ENCODE measurements at regions of chr2 and their contacts with region 1.

Region 1: GRCh38 chr2:75627895-75628504 is 18.6 kb upstream of the MRPL19 start:
- DNase-seq: peak; percentile 85
- ATAC-seq: peak; percentile 92
- H3K4me3 Mint-ChIP-seq: no peak overlapping the region
- H3K27ac Mint-ChIP-seq: no peak overlapping the region
- H3K4me1 Mint-ChIP-seq: peaks cover 9% of the 10 kb centered on the region
- H3K27me3 Mint-ChIP-seq: no peaks in the 10 kb centered on the region
- CTCF ChIP-seq: peak; percentile 78

Region 2: DNA sequence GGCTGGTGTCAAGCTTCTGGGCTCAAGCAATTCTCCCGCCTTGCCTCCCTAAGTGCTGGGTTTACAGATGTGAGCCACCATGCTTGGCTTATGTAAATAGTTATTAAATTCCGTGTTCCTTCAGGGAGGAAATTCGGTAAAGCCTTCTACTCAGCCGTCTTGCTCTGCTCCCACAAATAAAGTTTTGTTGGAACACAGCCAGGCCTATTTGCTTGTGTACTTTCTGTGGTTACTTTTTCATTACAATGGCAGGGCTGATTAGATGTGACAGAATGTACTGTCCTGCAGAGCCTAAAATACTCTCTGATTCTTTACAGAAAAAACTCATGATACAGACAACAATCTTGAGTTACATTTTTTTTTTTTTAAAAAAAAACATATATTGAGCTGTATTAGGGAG is 359.9 kb before region 1 on chr2:
- CTCF ChIA-PET with region 1: no interaction called
- POLR2A ChIA-PET with region 1: no interaction called
- DNase-seq: no peak
- ATAC-seq: no peak
- H3K4me3 Mint-ChIP-seq: no peak overlapping the region
- H3K27ac Mint-ChIP-seq: no peak overlapping the region
- H3K4me1 Mint-ChIP-seq: no peaks in the 10 kb centered on the region
- H3K27me3 Mint-ChIP-seq: no peaks in the 10 kb centered on the region
- CTCF ChIP-seq: no peak

Region 3: DNA sequence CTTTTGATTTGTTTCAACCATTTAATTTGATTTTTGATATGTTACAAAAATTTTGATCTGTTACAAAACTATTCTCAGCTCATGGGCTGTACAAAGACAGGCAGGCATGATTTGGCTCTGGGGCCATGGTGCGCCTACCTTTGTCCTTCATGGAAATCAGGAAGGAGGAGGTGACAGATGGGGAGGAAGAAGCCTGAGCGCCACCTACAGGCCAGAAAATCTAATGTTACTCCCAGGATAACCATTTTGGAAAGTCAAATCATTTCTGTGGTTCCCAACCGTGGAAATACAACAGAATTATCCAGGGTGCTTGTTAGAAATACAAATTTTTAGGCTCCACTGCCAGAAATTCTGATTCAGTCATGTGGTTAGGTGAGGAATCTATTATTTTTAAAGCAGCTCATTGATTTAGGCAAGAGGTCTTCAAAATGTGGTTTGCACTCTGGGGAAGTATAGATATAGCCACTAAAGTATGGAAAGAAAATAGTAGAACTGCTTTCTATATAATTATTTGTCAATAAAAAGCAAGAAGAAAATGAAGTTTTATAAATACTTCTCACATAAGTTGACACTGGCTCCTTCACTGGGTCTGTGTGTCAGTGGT is 161.2 kb before region 1 on chr2:
- CTCF ChIA-PET with region 1: interaction called, 13 read pairs
- POLR2A ChIA-PET with region 1: no interaction called
- DNase-seq: peak; percentile 71
- ATAC-seq: peak; percentile 79
- H3K4me3 Mint-ChIP-seq: no peak overlapping the region
- H3K27ac Mint-ChIP-seq: no peak overlapping the region
- H3K4me1 Mint-ChIP-seq: peaks cover 15% of the 10 kb centered on the region
- H3K27me3 Mint-ChIP-seq: no peaks in the 10 kb centered on the region
- CTCF ChIP-seq: peak; percentile 80

Region 4: GRCh38 chr2:75560768-75561565 is 67.0 kb before region 1 on chr2 and contains the start of gene EVA1A:
- CTCF ChIA-PET with region 1: interaction called, 10 read pairs
- POLR2A ChIA-PET with region 1: no interaction called
- DNase-seq: peak; percentile 73
- ATAC-seq: peak; percentile 65
- H3K4me3 Mint-ChIP-seq: peak within 1 kb of the TSS; percentile 97
- H3K27ac Mint-ChIP-seq: peak within 1 kb of the TSS; percentile 48; the same call in 1 of the 2 replicates
- H3K4me1 Mint-ChIP-seq: peaks cover 40% of the 10 kb centered on the region
- H3K27me3 Mint-ChIP-seq: peaks cover 29% of the 10 kb centered on the region
- CTCF ChIP-seq: no peak
- total RNA-seq, gene EVA1A: 3.2 to 4.1 TPM (median 3.3 TPM) in 3 replicates

Region 5: DNA sequence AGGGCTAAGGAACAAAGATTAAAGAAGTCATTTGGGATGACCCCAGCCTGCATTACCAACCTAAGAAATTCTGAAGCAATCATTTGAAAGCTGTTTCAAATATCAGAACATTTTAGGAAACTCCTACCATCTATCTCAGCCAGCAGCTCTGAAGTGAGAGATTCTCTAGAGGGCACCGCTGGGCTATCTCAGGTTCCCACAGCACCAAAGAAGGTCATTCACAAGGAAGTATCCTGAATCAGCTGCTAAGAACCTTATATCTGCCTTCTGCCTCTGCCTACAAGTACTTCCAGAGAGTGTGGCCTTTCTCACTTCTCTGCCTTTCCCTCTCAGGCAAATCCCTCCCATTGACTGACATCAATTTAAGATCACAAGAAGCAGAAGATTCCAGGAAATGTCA is 53.9 kb before region 1 on chr2:
- CTCF ChIA-PET with region 1: interaction called, 10 read pairs
- POLR2A ChIA-PET with region 1: no interaction called
- DNase-seq: no peak
- ATAC-seq: peak; percentile 51; the same call in 1 of the 2 replicates
- H3K4me3 Mint-ChIP-seq: no peak overlapping the region
- H3K27ac Mint-ChIP-seq: no peak overlapping the region
- H3K4me1 Mint-ChIP-seq: no peaks in the 10 kb centered on the region
- H3K27me3 Mint-ChIP-seq: no peaks in the 10 kb centered on the region; the same call in none of the 2 replicates
- CTCF ChIP-seq: no peak

Region 6: DNA sequence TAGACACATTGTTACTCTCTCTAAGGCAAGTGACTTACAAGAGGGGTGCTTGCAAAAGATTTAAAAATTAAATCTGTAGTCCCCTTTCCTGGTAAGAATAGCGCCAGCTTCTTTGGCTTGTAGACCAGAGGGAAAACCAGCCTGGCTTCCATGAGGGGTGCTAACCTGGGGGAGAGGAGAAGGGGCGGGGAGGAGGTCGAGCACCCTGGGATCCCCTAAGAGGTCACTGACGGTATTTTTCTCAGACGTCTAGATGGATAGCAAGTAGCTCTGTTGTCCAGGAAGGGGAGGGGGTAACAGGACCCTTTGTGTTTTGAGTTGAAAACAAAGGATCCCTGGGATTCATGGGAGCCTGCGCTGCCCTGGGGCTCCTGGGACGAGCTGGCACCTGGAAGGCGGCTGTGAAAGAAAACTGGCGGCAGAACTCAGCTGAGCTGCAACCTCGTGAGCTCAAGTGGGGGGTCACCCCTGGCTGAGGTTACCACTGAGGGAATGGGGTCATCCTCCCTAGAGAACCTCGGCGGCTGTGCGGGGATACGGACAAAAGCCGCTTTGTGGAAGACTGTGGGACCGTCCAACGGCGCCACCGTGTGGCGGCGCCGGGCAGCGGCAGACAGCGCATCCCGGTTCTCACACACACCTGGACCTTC is 19.2 kb before region 1 on chr2:
- CTCF ChIA-PET with region 1: interaction called, 19 read pairs
- POLR2A ChIA-PET with region 1: interaction called, 3 read pairs
- DNase-seq: peak; percentile 80
- ATAC-seq: peak; percentile 88
- H3K4me3 Mint-ChIP-seq: peak overlapping the region; percentile 66
- H3K27ac Mint-ChIP-seq: no peak overlapping the region
- H3K4me1 Mint-ChIP-seq: peaks cover 13% of the 10 kb centered on the region
- H3K27me3 Mint-ChIP-seq: peaks cover 16% of the 10 kb centered on the region
- CTCF ChIP-seq: peak; percentile 86

Region 7: DNA sequence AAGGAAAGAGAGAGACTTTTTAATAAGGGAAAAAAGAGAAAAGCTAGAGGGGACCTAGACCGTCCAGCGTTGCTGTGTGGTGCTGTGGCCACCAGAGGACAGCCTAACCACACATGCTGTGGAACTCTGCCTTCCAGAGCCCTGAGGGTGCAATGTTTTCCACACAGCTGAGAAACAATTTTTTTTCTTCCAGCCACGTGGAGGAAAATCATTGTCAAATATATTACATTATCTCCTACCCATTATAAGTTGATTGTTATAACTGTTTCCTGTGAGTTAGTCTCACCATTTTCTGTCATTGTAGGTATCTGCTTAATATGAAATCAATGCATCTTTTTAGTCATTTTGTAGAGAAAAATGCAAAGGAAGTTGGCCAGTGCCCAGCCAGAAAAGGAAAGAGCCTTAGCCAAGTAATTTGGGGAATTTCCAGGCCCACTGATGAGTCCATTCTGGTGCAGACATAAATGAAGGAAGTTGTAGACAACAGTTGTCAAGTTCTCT is 12.7 kb after region 1 on chr2:
- CTCF ChIA-PET with region 1: interaction called, 24 read pairs
- POLR2A ChIA-PET with region 1: no interaction called
- DNase-seq: peak; percentile 68
- ATAC-seq: peak; percentile 98
- H3K4me3 Mint-ChIP-seq: no peak overlapping the region
- H3K27ac Mint-ChIP-seq: no peak overlapping the region
- H3K4me1 Mint-ChIP-seq: peaks cover 9% of the 10 kb centered on the region
- H3K27me3 Mint-ChIP-seq: no peaks in the 10 kb centered on the region; the same call in 1 of the 2 replicates
- CTCF ChIP-seq: peak; percentile 81

Region 8: DNA sequence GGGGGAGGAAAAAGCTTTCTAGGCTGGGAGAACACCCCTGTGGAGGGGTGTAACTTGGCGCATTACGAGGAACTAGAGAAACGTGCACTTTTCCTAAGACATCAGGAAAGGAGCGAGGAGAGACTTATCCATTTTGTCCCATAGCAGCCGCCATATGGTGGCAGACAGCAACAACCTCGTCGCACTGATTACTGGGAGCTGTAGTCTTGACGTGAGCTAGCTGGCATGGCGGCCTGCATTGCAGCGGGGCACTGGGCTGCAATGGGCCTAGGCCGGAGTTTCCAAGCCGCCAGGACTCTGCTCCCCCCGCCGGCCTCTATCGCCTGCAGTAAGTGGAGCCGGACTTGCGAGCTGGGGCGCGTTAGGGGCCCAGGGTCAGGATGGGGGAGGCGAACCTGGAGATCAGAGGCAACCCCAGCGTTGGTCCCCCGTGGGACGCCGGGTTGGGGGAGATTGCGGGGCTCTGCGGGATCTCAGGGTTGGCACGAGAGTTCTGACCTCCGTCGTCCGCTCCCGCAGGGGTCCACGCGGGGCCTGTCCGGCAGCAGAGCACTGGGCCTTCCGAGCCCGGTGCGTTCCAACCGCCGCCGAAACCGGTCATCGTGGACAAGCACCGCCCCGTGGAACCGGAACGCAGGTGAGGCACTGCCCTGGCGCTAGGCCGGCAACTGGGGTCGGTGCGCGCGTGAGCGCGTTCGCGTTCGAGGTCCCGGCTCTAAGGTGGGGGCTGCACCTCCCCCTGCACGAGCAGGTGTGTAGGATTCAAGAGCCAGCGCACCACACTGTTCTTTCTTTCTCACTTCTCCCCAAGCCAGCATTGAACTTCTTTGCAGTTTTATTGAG is 18.8 kb after region 1 on chr2 and contains the start of gene MRPL19:
- CTCF ChIA-PET with region 1: interaction called, 24 read pairs
- POLR2A ChIA-PET with region 1: no interaction called
- DNase-seq: peak; percentile 77
- ATAC-seq: peak; percentile 98
- H3K4me3 Mint-ChIP-seq: peak within 1 kb of the TSS; percentile 94
- H3K27ac Mint-ChIP-seq: peak within 1 kb of the TSS; percentile 94
- H3K4me1 Mint-ChIP-seq: peaks cover 10% of the 10 kb centered on the region; the same call in 1 of the 2 replicates
- H3K27me3 Mint-ChIP-seq: no peaks in the 10 kb centered on the region
- CTCF ChIP-seq: no peak
- total RNA-seq, gene MRPL19: 65.8 to 71.3 TPM (median 70.0 TPM) in 3 replicates

Region 9: GRCh38 chr2:75676464-75676863 is 48.5 kb after region 1 on chr2:
- CTCF ChIA-PET with region 1: no interaction called
- POLR2A ChIA-PET with region 1: no interaction called
- DNase-seq: no peak
- ATAC-seq: no peak
- H3K4me3 Mint-ChIP-seq: no peak overlapping the region
- H3K27ac Mint-ChIP-seq: no peak overlapping the region
- H3K4me1 Mint-ChIP-seq: no peaks in the 10 kb centered on the region
- H3K27me3 Mint-ChIP-seq: no peaks in the 10 kb centered on the region
- CTCF ChIP-seq: no peak

Region 10: GRCh38 chr2:75882530-75882929 is 254.5 kb after region 1 on chr2:
- CTCF ChIA-PET with region 1: no interaction called
- POLR2A ChIA-PET with region 1: no interaction called
- DNase-seq: no peak
- ATAC-seq: no peak
- H3K4me3 Mint-ChIP-seq: no peak overlapping the region
- H3K27ac Mint-ChIP-seq: no peak overlapping the region
- H3K4me1 Mint-ChIP-seq: no peaks in the 10 kb centered on the region
- H3K27me3 Mint-ChIP-seq: no peaks in the 10 kb centered on the region; the same call in 1 of the 2 replicates
- CTCF ChIP-seq: no peak

Measured in WTC11 (cell line).